A549 (cell line): ENCODE measurements at regions of chr7 and their contacts with region 1.

Region 1: GRCh38 chr7:27143023-27143949 is at the start of gene HOXA5:
- DNase-seq: peak; percentile 95 to 96
- ATAC-seq: peak; percentile 78 to 85
- H3K4me3 ChIP-seq: peak within 1 kb of the TSS; percentile 72
- H3K27ac ChIP-seq: peak within 1 kb of the TSS; percentile 79 to 93
- H3K4me1 ChIP-seq: peaks cover 5% of the 10 kb centered on the region; the same call in 2 of the 3 replicates
- CTCF ChIP-seq: peak; percentile 88
- EP300 ChIP-seq: no peak
- POLR2A ChIP-seq: no peak
- RAD21 ChIP-seq: peak; percentile 73 to 91
- polyA plus RNA-seq, gene HOXA5: 6.3 and 6.5 TPM in 2 replicates

Region 2: DNA sequence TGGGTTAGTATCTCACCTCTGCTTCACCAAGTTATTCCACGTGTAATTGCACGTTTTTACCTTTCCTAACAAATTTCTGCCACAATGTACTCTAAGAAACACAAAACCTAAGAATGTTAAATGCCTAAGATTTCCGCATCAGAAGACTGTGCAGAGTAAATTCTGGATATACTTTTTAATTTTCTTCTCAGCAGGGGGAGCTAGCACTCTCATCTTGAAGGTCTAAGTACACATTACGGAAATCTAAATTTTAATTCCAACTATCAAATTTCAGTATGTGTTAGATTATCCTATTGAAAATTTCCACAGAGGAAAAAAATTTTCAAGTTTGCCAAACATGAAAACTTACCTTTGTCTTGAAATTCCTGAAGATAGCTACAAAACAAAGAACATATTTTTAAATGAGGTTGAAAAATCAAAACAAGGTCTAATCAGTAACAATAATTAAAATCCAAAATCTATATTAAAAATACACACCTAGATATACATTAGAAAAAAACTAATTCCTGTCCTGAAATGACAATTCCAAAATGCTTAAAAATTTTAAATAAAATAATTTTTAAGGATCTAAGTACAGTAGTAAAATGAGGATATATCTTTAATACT is 289.4 kb before region 1 on chr7:
- CTCF ChIA-PET with region 1: interaction called, 71 read pairs
- POLR2A ChIA-PET with region 1: interaction called, 7 read pairs
- DNase-seq: peak in 1 of 2 experiments; percentile 67
- ATAC-seq: peak; percentile 78 to 86; a peak in 5 of 6 replicates
- H3K4me3 ChIP-seq: no peak overlapping the region
- H3K27ac ChIP-seq: no peak overlapping the region
- H3K4me1 ChIP-seq: peaks cover 9% of the 10 kb centered on the region
- CTCF ChIP-seq: peak; percentile 86
- EP300 ChIP-seq: no peak
- POLR2A ChIP-seq: no peak
- RAD21 ChIP-seq: peak; percentile 79 to 80

Region 3: DNA sequence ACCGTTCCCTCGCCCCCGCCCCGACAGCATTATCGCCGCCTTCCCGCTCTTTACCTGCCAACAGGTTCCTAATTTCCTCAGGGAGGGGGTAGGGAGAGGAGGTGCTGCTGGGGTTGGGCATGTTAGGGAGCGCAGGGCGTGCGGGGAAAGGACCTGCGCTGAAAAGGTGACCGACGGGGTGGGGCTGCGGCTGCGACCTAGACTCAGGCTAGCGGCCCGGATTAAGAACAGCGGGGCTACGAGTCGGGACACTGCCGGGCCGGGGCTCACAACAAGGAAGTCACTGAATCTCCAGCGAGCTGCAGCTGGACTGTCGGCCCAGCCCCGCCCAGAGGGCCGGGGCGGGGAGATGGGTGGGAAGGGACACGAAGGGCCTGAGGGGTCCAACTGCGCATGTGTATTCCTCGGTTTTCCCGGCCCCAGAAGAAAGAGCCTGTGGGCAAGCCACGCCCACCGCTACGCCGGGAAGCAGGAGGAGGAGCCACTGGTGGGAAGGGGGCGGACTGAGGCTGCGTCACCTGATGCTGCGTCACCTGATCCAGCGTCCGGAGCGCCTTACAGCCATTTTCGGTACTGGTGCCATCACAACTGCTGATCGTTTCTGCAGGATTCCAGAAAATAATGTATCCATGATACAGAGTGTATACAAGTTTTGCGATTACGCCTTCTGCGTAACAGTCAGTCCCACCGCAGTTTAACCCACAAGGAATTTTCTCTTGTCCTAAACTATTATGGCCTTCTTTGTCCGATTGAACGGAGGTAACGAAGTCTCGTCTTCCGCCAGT is 278.8 kb before region 1 on chr7 and contains the start of gene SKAP2:
- CTCF ChIA-PET with region 1: interaction called, 20 read pairs
- POLR2A ChIA-PET with region 1: interaction called, 9 read pairs
- DNase-seq: peak; percentile 93 to 99
- ATAC-seq: peak; percentile 96 to 98
- H3K4me3 ChIP-seq: peak within 1 kb of the TSS; percentile 81
- H3K27ac ChIP-seq: peak within 1 kb of the TSS; percentile 90 to 92
- H3K4me1 ChIP-seq: peaks cover 17% of the 10 kb centered on the region; the same call in 2 of the 3 replicates
- CTCF ChIP-seq: no peak
- EP300 ChIP-seq: no peak
- POLR2A ChIP-seq: peak; percentile 70
- RAD21 ChIP-seq: no peak
- polyA plus RNA-seq, gene SKAP2: 22.1 and 23.0 TPM in 2 replicates

Region 4: DNA sequence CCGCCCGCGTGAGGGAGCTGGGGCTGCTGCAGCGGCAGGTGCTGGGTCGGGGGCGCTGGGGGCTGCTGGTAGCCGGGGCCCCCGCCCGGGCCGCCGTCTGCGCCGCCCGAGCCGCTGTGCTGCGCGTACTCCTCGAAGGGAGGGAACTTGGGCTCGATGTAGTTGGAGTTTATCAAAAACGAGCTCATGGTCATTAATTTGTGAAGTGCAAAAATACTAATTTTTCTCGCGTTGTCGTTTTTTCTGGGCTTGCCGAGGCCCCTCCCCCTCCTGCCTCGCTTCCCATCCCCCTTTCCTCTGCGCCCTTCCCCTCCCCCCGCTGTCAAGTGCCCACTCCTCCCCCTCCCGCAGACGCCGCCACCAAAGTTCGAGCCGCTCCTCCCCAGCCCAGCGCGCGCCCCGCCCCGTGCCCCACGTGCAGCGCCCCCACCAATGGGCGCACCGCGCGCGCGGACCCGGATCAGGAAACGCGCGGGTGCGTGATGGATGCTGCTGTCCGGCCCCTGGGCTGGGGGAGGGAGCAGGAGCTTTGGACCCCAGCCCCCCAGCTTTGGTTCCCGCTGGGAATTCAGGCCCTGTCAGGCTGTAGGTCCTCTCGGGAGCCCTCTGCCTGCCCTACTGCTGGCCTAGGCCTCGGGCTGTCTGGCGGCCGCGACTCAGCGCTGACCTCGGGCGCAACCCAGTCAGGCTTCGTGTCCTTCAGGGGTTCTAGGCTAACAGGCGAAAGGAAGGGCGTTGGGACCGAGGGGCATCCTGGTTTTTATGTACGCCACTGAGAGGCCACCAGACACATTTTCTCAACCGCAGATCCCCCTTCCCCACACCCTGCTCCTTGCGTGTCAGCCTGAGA is 12.5 kb before region 1 on chr7 and contains the start of gene HOXA4:
- CTCF ChIA-PET with region 1: interaction called, 22 read pairs
- POLR2A ChIA-PET with region 1: no interaction called
- DNase-seq: peak in 1 of 2 experiments; percentile 84
- ATAC-seq: peak; percentile 87 to 88
- H3K4me3 ChIP-seq: peak within 1 kb of the TSS; percentile 54
- H3K27ac ChIP-seq: peak within 1 kb of the TSS; percentile 82 to 95
- H3K4me1 ChIP-seq: peaks cover 31% of the 10 kb centered on the region
- CTCF ChIP-seq: no peak
- EP300 ChIP-seq: no peak
- POLR2A ChIP-seq: peak; percentile 17; the same call in 1 of the 2 replicates
- RAD21 ChIP-seq: no peak
- polyA plus RNA-seq, gene HOXA4: 2.6 and 2.8 TPM in 2 replicates